PC-3 (cell line): ENCODE measurements at regions of chr2 and their contacts with region 1.

Region 1: GRCh38 chr2:178280244-178280852 is 86.0 kb downstream of the OSBPL6 start:
- DNase-seq: peak; percentile 80
- ATAC-seq: peak; percentile 15; the same call in 1 of the 2 replicates
- H3K4me3 ChIP-seq: no peak overlapping the region
- H3K27ac ChIP-seq: peak overlapping the region; percentile 79; the same call in 1 of the 2 replicates
- H3K4me1 ChIP-seq: peaks cover 30% of the 10 kb centered on the region
- H3K27me3 ChIP-seq: no peaks in the 10 kb centered on the region
- CTCF ChIP-seq: peak; percentile 81

Region 2: GRCh38 chr2:178193823-178194599 is 86.3 kb before region 1 on chr2 and contains the start of gene OSBPL6:
- CTCF ChIA-PET with region 1: no interaction called
- POLR2A ChIA-PET with region 1: no interaction called
- intact Hi-C with region 1: loop called (anchors 1 kb)
- DNase-seq: peak; percentile 84
- ATAC-seq: peak; percentile 82
- H3K4me3 ChIP-seq: peak within 1 kb of the TSS; percentile 83
- H3K27ac ChIP-seq: peak within 1 kb of the TSS; percentile 19; the same call in 1 of the 2 replicates
- H3K4me1 ChIP-seq: peaks cover 26% of the 10 kb centered on the region
- H3K27me3 ChIP-seq: no peaks in the 10 kb centered on the region
- CTCF ChIP-seq: peak; percentile 8; the same call in 1 of the 2 replicates
- total RNA-seq, gene OSBPL6: 2.8 and 4.0 TPM in 2 replicates

Region 3: DNA sequence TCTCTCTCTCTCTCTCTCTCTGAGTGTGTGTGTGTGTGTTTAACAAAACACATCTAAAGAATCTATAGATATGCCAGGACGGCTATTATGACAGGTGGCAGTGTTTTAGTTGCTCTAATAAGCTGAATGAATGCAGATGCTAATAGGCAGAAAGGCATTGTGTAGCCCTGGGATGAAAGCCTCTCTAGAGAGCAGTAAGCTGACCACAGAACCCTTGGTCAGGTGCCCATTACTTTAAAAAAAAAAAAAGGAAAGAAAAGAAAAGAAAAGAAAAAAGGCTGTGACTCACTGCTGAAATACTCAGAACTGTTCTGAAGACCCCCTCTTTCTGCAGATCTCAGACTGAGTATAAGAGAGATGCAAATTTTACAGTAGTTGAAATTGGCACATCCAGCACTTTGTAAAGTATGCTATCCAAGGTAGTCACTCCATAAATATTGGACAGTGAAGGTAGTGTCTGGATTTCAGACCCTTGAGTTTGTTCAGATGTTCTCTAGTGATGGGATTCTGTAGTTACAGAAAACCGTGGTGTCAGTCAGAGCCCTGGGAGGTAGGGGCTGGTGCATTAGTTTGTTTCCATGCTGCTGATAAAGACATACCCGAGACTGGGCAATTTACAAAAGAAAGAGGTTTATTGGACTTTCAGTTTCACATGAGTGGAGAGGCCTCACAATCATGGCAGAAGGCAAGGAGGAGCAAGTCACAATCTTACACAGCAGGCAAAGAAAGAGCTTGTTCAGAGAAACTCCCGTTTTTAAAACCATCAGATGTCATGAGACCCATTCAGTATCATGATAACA is 55.1 kb before region 1 on chr2:
- CTCF ChIA-PET with region 1: no interaction called
- POLR2A ChIA-PET with region 1: no interaction called
- intact Hi-C with region 1: no loop called
- DNase-seq: no peak
- ATAC-seq: no peak
- H3K4me3 ChIP-seq: no peak overlapping the region
- H3K27ac ChIP-seq: no peak overlapping the region
- H3K4me1 ChIP-seq: peaks cover 13% of the 10 kb centered on the region
- H3K27me3 ChIP-seq: no peaks in the 10 kb centered on the region
- CTCF ChIP-seq: no peak

Region 4: DNA sequence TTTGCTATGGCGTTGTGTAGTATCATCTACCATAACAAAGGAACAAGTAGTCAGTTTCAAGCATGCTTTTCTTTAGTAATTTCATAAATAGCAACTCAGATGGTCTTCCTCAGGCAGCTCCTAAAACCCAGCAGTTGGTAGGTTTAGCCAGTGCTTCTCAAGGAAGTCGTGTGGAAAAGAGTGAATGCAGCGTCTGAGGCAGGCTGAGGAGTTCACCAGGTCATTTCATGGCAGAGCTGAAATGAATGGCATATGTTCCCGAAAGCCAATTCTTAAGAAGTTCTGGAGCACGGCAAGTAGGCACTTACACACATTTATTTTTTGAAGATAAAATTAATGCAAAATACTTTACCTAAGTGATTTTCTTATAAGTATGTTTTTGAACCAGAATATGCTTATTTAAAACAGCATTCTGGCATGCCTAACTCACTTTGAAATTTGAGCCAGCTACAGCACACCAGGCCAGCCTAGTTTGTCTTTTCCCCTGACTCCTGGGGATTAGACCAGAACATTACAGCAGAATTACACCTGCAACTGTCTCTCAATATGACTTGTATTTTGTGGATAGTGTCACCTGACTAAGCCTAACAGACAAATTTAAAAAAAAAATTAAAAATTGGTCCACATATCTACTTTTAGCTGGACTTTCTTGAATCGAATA is 23.8 kb before region 1 on chr2:
- CTCF ChIA-PET with region 1: interaction called, 6 read pairs
- POLR2A ChIA-PET with region 1: no interaction called
- intact Hi-C with region 1: loop called (anchors 1 kb)
- DNase-seq: no peak
- ATAC-seq: peak; percentile 45
- H3K4me3 ChIP-seq: no peak overlapping the region
- H3K27ac ChIP-seq: peak overlapping the region; percentile 46
- H3K4me1 ChIP-seq: peaks cover 26% of the 10 kb centered on the region
- H3K27me3 ChIP-seq: no peaks in the 10 kb centered on the region
- CTCF ChIP-seq: no peak

Region 5: GRCh38 chr2:178298785-178299212 is 18.5 kb after region 1 on chr2:
- CTCF ChIA-PET with region 1: no interaction called
- POLR2A ChIA-PET with region 1: interaction called, 8 read pairs
- intact Hi-C with region 1: loop called (anchors 2 kb)
- DNase-seq: peak; percentile 86
- ATAC-seq: peak; percentile 99
- H3K4me3 ChIP-seq: no peak overlapping the region
- H3K27ac ChIP-seq: peak overlapping the region; percentile 42
- H3K4me1 ChIP-seq: peaks cover 14% of the 10 kb centered on the region
- H3K27me3 ChIP-seq: no peaks in the 10 kb centered on the region
- CTCF ChIP-seq: no peak